ENCODE measurements at regions of chr1 and their contacts with region 1.

Region 1: DNA sequence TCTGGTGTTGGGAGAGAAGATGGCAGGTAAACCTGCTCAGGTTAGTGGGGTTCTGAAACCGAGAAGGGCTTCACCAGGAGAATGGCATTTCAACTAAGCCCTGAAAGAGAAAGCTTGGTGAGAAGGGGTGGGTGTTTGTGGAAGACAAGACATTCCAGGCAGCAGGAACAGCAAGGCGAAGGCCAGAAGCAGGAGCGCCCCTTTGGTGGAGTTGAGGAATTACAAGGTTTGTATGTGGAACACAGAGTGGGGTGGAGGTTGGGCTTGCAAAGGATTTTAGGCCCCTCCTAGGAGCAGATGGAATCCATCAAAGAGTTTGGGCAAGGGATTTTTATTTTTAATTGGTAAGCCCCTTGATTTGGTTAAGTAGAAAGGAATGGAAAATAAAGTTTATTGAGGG is 24.8 kb upstream of the ELOA start:
- DNase-seq: no peak
- ATAC-seq: no peak
- H3K4me3 Mint-ChIP-seq: no peak overlapping the region
- H3K27ac Mint-ChIP-seq: peak overlapping the region; percentile 75
- H3K4me1 Mint-ChIP-seq: peaks cover 53% of the 10 kb centered on the region
- H3K27me3 Mint-ChIP-seq: no peaks in the 10 kb centered on the region
- CTCF ChIP-seq: no peak

Region 2: DNA sequence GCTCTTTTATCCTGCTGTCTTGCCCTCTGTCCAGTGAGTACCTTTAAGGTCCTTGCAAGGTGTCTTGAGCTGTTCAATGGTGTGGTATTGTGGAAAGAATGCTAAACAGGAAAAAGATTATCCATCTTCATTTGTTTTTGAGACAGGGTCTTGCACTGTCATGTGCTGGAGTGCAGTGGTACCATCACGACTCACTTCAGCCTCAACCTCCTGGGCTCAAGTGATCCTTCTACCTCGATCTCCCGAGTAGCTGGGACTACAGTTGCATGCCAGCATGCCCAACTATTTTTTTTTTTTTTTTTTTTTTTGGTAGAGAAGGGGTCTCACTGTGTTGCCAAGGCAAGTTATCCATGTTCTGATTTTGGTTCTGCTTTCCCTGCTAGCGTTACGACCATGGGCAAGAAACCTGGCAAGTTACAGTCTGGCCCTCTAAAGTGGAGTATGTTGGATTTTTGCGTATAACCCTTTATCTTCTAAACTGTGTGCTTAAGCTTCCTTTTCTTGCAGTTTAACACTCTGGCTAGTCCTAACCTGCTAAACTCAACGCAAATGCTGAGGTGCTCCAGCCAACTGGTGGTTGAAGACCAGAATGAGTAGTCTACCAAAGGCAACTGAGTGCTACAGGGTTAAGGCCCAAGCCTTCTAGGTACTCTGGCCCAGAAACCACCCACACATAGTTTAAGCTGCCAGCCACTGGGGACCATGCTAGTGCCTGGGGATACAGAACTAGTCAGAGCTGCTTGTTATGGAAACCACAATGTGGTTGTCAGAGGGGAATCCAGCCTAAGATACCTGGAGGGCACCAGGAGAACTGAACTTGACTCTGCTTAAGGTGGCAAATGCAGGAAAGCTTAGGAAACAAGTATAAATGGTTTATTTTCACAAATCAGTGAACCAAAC is 19.0 kb before region 1 on chr1:
- CTCF ChIA-PET with region 1: interaction called, 3 read pairs
- POLR2A ChIA-PET with region 1: interaction called, 143 read pairs
- intact Hi-C with region 1: loop called (anchors 1 kb)
- DNase-seq: no peak
- ATAC-seq: peak; percentile 84
- H3K4me3 Mint-ChIP-seq: no peak overlapping the region
- H3K27ac Mint-ChIP-seq: no peak overlapping the region
- H3K4me1 Mint-ChIP-seq: peaks cover 42% of the 10 kb centered on the region
- H3K27me3 Mint-ChIP-seq: no peaks in the 10 kb centered on the region
- CTCF ChIP-seq: no peak

Region 3: GRCh38 chr1:23743287-23744052 is 25.0 kb after region 1 on chr1 and contains the start of gene ELOA:
- CTCF ChIA-PET with region 1: interaction called, 5 read pairs
- POLR2A ChIA-PET with region 1: interaction called, 145 read pairs
- intact Hi-C with region 1: loop called (anchors 1 kb)
- DNase-seq: peak; percentile 76
- ATAC-seq: peak; percentile 91
- H3K4me3 Mint-ChIP-seq: peak within 1 kb of the TSS; percentile 90
- H3K27ac Mint-ChIP-seq: peak within 1 kb of the TSS; percentile 89
- H3K4me1 Mint-ChIP-seq: peaks cover 52% of the 10 kb centered on the region
- H3K27me3 Mint-ChIP-seq: no peaks in the 10 kb centered on the region
- CTCF ChIP-seq: no peak
- total RNA-seq, gene ELOA: 70.2 and 72.6 TPM in 2 replicates

Region 4: GRCh38 chr1:24336075-24336474 is 617.6 kb after region 1 on chr1:
- CTCF ChIA-PET with region 1: no interaction called
- POLR2A ChIA-PET with region 1: no interaction called
- intact Hi-C with region 1: no loop called
- DNase-seq: no peak
- ATAC-seq: no peak
- H3K4me3 Mint-ChIP-seq: no peak overlapping the region
- H3K27ac Mint-ChIP-seq: no peak overlapping the region
- H3K4me1 Mint-ChIP-seq: no peaks in the 10 kb centered on the region
- H3K27me3 Mint-ChIP-seq: peaks cover 5% of the 10 kb centered on the region
- CTCF ChIP-seq: no peak